Cardiac septum (tissue), 1 donor: ENCODE measurements at regions of chr2 and their contacts with region 1.

Region 1: DNA sequence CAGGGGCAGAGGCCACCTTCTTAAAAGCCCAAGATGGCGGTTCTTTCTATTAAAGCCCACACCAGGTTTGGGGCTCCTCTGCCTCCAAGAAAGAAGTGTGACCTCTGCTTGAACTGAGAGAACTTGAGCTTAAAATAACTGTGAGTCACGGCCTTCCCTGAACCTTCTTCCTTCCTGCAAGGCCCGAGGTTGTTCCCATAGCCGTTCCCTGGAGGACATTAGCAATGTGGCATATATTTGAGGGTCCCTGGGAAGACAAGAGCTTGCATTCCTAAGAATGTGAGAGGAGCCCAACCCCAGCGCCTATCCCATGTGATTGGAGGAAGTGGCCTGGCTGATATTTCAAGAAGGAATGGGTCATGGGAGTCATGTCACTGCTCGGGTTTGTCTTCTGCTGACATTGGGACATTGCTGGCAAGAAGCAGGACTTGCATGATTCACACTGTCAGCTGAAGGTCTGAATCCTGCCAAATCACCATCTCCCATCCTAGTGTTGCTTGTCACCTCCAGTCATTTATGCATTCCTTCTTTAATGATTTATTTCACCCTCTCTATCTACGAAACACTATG is 168.1 kb downstream of the TRIB2 start:
- DNase-seq: peak; percentile 76

Region 2: GRCh38 chr2:12376025-12376424 is 508.8 kb before region 1 on chr2:
- intact Hi-C with region 1: no loop called
- DNase-seq: no peak

Region 3: DNA sequence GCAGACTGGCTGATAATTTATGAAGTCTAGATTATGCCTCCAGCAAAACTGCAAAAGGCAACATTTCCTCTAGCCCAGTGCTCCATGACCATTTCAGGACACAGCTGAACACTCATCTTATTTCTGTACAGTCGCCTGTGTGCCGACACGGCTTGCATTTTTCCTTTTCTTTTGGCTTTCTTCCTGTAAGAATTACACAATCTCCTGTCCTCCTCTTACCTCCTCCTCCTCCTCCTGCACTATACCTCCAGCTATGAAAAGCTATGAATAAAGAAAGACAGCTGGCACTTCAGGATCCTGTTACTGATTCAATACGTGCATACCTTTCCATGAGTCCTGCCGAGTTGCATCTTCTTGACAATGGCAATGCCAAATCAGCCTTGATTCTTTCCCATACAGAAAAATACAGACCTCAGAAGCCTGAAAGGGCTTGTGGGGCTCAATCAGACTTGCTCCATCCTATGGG is 200.3 kb before region 1 on chr2:
- intact Hi-C with region 1: no loop called
- DNase-seq: no peak

Region 4: DNA sequence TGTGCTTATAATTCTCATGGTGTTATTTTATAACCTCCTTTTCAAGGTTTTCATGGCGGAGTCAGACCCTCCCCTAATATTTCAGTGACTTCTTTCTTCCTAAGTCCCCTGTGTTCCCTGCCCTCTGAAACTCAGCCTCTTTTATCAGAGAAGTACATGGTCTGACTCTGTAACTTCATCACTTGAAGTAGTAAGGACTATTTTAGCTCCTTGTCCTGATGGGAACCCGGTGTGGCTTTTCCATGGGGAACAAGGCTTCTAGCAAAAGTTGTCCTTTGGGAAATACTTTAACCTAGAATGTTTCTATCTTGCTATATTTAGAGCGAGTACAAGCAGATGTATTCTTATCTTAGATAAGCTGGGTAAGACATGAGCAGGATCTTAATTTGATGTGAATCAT is 50.6 kb before region 1 on chr2:
- intact Hi-C with region 1: loop called (anchors 5 kb)
- DNase-seq: no peak

Region 5: GRCh38 chr2:12923907-12924610 is 39.3 kb after region 1 on chr2:
- intact Hi-C with region 1: loop called (anchors 5 kb)
- DNase-seq: no peak

Region 6: GRCh38 chr2:13067508-13067907 is 182.7 kb after region 1 on chr2:
- intact Hi-C with region 1: no loop called
- DNase-seq: no peak